ENCODE measurements at regions of chr2 and their contacts with region 1.

Region 1: GRCh38 chr2:191391171-191391570 is 146.0 kb downstream of the MYO1B start:
- DNase-seq: no peak
- ATAC-seq: no peak
- H3K4me3 ChIP-seq: no peak overlapping the region
- H3K27ac ChIP-seq: no peak overlapping the region
- H3K4me1 ChIP-seq: peaks cover 6% of the 10 kb centered on the region
- H3K27me3 ChIP-seq: no peaks in the 10 kb centered on the region
- CTCF ChIP-seq: no peak

Region 2: DNA sequence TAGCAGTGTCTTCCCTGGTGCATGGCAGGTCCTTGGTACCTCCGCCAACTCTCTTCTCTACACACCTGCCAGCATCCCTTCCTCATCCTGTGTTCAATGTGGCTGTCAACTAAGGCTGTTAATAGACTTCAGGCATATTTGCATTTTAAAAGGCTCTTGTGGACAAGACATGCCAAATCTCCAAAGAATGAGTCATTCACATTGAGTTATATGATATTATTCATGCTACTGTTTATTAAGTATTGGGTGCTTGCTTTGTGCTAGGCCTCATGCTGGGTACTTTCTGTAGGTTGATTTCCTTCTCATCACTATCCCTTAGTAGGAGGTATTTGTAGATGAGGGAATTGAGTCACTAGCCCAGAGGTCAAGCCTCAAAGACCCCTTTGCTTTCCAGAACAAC is 140.8 kb before region 1 on chr2:
- intact Hi-C with region 1: loop called (anchors 5 kb)
- DNase-seq: no peak
- ATAC-seq: no peak
- H3K4me3 ChIP-seq: no peak overlapping the region
- H3K27ac ChIP-seq: no peak overlapping the region
- H3K4me1 ChIP-seq: peaks cover 50% of the 10 kb centered on the region
- H3K27me3 ChIP-seq: no peaks in the 10 kb centered on the region
- CTCF ChIP-seq: no peak

Region 3: GRCh38 chr2:191486584-191487320 is 95.6 kb after region 1 on chr2:
- intact Hi-C with region 1: no loop called
- DNase-seq: no peak
- ATAC-seq: no peak
- H3K4me3 ChIP-seq: no peak overlapping the region
- H3K27ac ChIP-seq: no peak overlapping the region
- H3K4me1 ChIP-seq: peaks cover 3% of the 10 kb centered on the region
- H3K27me3 ChIP-seq: no peaks in the 10 kb centered on the region
- CTCF ChIP-seq: no peak

Measured in upper lobe of right lung (tissue), 1 donor.